Panc1 (cell line): ENCODE measurements at regions of chr7 and their contacts with region 1.

Region 1: GRCh38 chr7:139416405-139416804 is 56.7 kb downstream of the LUC7L2 start:
- DNase-seq: no peak
- ATAC-seq: no peak
- H3K4me3 ChIP-seq: no peak overlapping the region
- H3K27ac ChIP-seq: no peak overlapping the region
- H3K4me1 ChIP-seq: no peaks in the 10 kb centered on the region
- H3K27me3 ChIP-seq: no peaks in the 10 kb centered on the region
- CTCF ChIP-seq: no peak

Region 2: GRCh38 chr7:139321071-139321745 is 95.2 kb before region 1 on chr7:
- CTCF ChIA-PET with region 1: no interaction called
- POLR2A ChIA-PET with region 1: no interaction called
- in situ Hi-C with region 1: no loop called
- intact Hi-C with region 1: loop called (anchors 5 kb)
- DNase-seq: no peak
- ATAC-seq: peak; percentile 75
- H3K4me3 ChIP-seq: no peak overlapping the region
- H3K27ac ChIP-seq: no peak overlapping the region
- H3K4me1 ChIP-seq: peaks cover 3% of the 10 kb centered on the region; the same call in 1 of the 2 replicates
- H3K27me3 ChIP-seq: no peaks in the 10 kb centered on the region
- CTCF ChIP-seq: no peak